Dorsolateral prefrontal cortex (tissue), 120 donors: ENCODE measurements at regions of chr12 and their contacts with region 1.

Region 1: GRCh38 chr12:68880660-68881325 is 52.2 kb downstream of the CPM start:
- DNase-seq: no peak
- H3K4me3 ChIP-seq: no peak overlapping the region
- H3K27ac ChIP-seq: peak overlapping the region in 56 of 59 donors; percentile 2 to 87 (median 74)
- H3K27me3 ChIP-seq: no peaks in the 10 kb centered on the region
- CTCF ChIP-seq: no peak

Region 2: GRCh38 chr12:68932961-68933893 is 52.4 kb after region 1 on chr12 and contains the start of gene CPM:
- intact Hi-C with region 1: loop called in 1 of 2 experiments (anchors 5 kb)
- DNase-seq: peak; percentile 12 to 86 (median 71)
- H3K4me3 ChIP-seq: peak within 1 kb of the TSS; percentile 48 to 93 (median 77)
- H3K27ac ChIP-seq: peak within 1 kb of the TSS in 58 of 59 donors; percentile 0 to 95 (median 84)
- H3K27me3 ChIP-seq: peaks cover 0 to 33% (median 6%) of the 10 kb centered on the region in 45 donors
- CTCF ChIP-seq: peak in 8 of 56 donors; percentile 4 to 44 (median 19)
- total RNA-seq, gene CPM: 9.4 to 89.6 (median 31.5) TPM

Region 3: GRCh38 chr12:69123919-69124638 is 243.3 kb after region 1 on chr12:
- intact Hi-C with region 1: no loop called
- DNase-seq: no peak
- H3K4me3 ChIP-seq: no peak overlapping the region
- H3K27ac ChIP-seq: peak overlapping the region in 1 of 59 donors; percentile 58
- H3K27me3 ChIP-seq: no peaks in the 10 kb centered on the region
- CTCF ChIP-seq: no peak